Activated CD4-positive, alpha-beta memory T cell treated with anti-CD3 and anti-CD28 coated beads, Interleukin-2, amount 10 ng/mL, durations not matched to agents 7 days and 5 days (primary cell): ENCODE measurements at regions of chr1 and their contacts with region 1.

Region 1: DNA sequence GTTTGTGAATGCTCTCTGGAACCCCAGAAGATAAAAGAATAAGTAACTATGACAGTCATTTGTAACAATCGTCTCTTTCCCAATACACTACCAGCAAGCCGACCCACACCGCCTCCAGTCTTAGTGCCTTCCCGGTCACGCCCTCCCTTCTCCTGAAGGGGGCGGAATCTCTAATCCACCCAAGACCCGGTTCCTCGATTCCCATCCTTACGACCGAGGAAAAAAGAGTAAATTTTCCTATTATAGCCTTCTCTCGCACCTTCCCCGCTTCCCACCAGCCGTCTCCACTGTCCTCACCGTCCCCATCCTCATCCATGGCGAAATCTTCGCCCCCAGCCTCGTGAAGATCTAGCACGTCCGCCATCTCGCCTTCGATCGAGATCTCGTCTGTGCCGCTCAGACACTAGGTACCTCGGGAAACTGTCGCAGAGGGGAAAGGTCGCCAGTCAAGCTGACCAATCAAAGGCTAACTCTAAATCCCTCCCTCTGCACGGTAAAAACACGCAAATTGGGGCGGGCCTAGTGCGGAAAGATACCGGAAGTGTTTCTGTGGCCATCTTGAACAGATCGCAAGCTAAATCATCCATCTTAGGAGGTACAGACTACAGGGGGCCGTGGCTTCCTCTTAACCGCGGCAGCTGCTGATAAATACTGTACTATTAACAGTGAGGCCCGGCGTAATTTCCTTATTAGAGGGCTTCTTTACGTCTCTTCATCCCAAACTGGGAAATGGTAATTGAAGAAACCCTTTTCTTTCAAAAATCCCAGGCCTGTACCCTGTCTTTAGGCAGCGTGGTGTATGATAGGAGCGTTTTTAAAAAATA is at the start of gene RBM8A:
- DNase-seq: peak; percentile 97
- H3K4me3 Mint-ChIP-seq: peak within 1 kb of the TSS; percentile 67
- H3K27ac Mint-ChIP-seq: no peak within 1 kb of the TSS
- H3K4me1 Mint-ChIP-seq: peaks cover 21% of the 10 kb centered on the region
- H3K27me3 Mint-ChIP-seq: no peaks in the 10 kb centered on the region
- total RNA-seq, gene RBM8A: 168 to 174 TPM

Region 2: GRCh38 chr1:145858894-145859490 is 68.3 kb before region 1 on chr1 and contains the start of gene PIAS3:
- CTCF ChIA-PET with region 1: interaction called, 3 read pairs
- POLR2A ChIA-PET with region 1: interaction called, 32 read pairs
- DNase-seq: peak; percentile 90
- H3K4me3 Mint-ChIP-seq: peak within 1 kb of the TSS; percentile 97
- H3K27ac Mint-ChIP-seq: peak within 1 kb of the TSS; percentile 76
- H3K4me1 Mint-ChIP-seq: peaks cover 16% of the 10 kb centered on the region
- H3K27me3 Mint-ChIP-seq: peaks cover 12% of the 10 kb centered on the region
- total RNA-seq, gene PIAS3: 21.2 to 21.7 TPM

Region 3: DNA sequence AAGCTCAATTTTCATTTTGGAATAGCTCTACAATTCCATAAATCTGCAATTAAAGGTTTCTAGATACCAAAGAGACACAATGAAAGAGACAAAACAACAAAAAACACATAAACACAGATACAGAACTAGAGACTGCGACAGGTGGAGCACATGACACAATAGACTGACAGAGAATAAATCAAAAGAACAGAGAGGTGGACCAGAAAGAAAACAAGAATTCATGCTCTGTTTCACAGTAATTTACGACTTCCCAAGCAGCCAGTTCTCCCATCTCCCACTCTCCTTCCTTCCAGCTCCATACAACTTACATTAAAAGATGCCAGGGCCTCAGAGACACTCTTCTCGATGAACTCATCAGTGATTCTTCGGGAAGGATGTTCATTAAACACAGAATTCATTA is 15.1 kb after region 1 on chr1:
- CTCF ChIA-PET with region 1: interaction called, 11 read pairs
- POLR2A ChIA-PET with region 1: interaction called, 14 read pairs
- DNase-seq: no peak
- H3K4me3 Mint-ChIP-seq: no peak overlapping the region
- H3K27ac Mint-ChIP-seq: no peak overlapping the region
- H3K4me1 Mint-ChIP-seq: peaks cover 2% of the 10 kb centered on the region
- H3K27me3 Mint-ChIP-seq: no peaks in the 10 kb centered on the region

Region 4: GRCh38 chr1:145978854-145979759 is 51.8 kb after region 1 on chr1:
- CTCF ChIA-PET with region 1: interaction called, 28 read pairs
- POLR2A ChIA-PET with region 1: interaction called, 36 read pairs
- DNase-seq: peak; percentile 90
- H3K4me3 Mint-ChIP-seq: no peak overlapping the region
- H3K27ac Mint-ChIP-seq: no peak overlapping the region
- H3K4me1 Mint-ChIP-seq: peaks cover 6% of the 10 kb centered on the region
- H3K27me3 Mint-ChIP-seq: no peaks in the 10 kb centered on the region

Region 5: DNA sequence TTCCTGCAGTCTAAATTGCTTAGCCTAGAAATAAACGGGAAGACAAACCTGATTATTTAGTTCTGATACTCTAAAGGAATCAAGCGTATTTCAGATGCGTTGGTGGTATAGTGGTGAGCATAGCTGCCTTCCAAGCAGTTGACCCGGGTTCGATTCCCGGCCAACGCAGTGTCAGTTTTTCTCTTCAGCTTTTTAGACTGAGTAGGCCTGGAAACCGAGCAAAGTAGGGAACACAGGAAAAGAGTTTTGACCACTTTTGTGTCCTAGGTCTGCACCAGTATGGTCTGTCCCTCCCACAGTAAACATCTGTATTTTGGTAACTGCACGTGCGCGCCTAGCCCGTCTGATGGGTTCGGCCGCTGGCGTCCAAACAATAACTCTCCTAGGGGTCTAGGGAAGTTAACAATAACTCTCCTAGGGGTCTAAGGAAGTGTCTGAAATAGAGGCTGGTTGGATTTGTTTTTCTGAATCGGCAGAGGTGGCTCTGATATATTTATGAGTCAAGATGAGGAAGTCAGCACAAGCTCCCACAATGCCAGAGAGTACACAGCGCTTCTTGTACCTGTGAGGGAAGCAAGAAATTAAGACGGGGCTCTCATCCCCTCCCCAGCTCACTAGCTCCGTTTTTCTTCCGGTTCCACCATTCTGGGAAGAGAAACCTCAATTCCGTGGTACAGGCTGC is 109.8 kb after region 1 on chr1:
- CTCF ChIA-PET with region 1: interaction called, 5 read pairs
- POLR2A ChIA-PET with region 1: interaction called, 20 read pairs
- DNase-seq: peak; percentile 85
- H3K4me3 Mint-ChIP-seq: peak overlapping the region; percentile 90
- H3K27ac Mint-ChIP-seq: peak overlapping the region; percentile 93
- H3K4me1 Mint-ChIP-seq: peaks cover 51% of the 10 kb centered on the region
- H3K27me3 Mint-ChIP-seq: peaks cover 7% of the 10 kb centered on the region